ENCODE measurements at regions of chr3 and their contacts with region 1.

Region 1: GRCh38 chr3:18988614-18989229 is 159.6 kb upstream of the KCNH8 start:
- DNase-seq: no peak
- H3K4me3 ChIP-seq: no peak overlapping the region
- H3K27ac ChIP-seq: no peak overlapping the region
- H3K4me1 ChIP-seq: peaks cover 0 to 11% (median 0%) of the 10 kb centered on the region in 4 experiments; a peak in 1 of 7 replicates
- H3K27me3 ChIP-seq: no peaks in the 10 kb centered on the region
- CTCF ChIP-seq: peak in 2 of 3 experiments; percentile 62 to 69; a peak in 2 of 4 replicates
- EP300 ChIP-seq: no peak
- POLR2A ChIP-seq: no peak
- RAD21 ChIP-seq: peak; percentile 94 to 95

Region 2: GRCh38 chr3:18559331-18559842 is 429.3 kb before region 1 on chr3:
- CTCF ChIA-PET with region 1: interaction called, 29 read pairs
- POLR2A ChIA-PET with region 1: no interaction called
- DNase-seq: peak; percentile 27 to 52
- H3K4me3 ChIP-seq: no peak overlapping the region
- H3K27ac ChIP-seq: no peak overlapping the region
- H3K4me1 ChIP-seq: peaks cover 0 to 5% (median 0%) of the 10 kb centered on the region in 4 experiments; a peak in 1 of 7 replicates
- H3K27me3 ChIP-seq: no peaks in the 10 kb centered on the region
- CTCF ChIP-seq: peak; percentile 30 to 78 (median 78)
- EP300 ChIP-seq: no peak
- POLR2A ChIP-seq: no peak
- RAD21 ChIP-seq: peak; percentile 80 to 84

Region 3: DNA sequence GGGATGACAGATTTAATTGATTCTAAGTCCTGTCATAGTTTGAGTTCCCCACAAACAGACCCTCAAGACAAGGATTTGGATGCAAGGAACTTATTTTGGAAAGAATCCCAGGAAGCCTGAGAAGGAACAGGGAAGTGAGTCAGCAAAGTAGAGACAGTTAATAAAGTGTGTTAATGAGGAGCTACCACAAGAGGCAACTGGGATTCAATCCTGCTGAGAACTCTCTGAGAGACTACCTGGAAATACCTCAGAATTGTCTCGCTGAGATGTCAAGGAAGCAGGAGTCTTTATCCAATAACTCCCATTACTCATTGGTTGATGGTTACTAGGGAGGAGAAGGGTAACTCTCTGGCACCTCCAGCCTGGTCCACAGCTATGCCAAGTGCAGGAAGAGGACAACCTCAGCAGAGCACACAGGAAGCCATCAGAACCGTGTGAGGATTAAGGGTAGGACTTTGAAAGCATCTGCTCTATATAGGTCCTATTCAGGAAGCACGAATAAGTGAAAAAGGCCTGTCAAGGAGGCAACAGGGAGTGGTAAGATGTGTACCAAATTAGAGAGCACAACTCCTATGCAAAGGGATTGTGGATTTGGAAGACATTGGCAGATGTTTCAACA is 151.5 kb before region 1 on chr3:
- CTCF ChIA-PET with region 1: interaction called, 18 read pairs
- POLR2A ChIA-PET with region 1: no interaction called
- DNase-seq: no peak
- H3K4me3 ChIP-seq: no peak overlapping the region
- H3K27ac ChIP-seq: no peak overlapping the region
- H3K4me1 ChIP-seq: no peaks in the 10 kb centered on the region; a peak in 1 of 7 replicates
- H3K27me3 ChIP-seq: no peaks in the 10 kb centered on the region
- CTCF ChIP-seq: no peak
- EP300 ChIP-seq: no peak
- POLR2A ChIP-seq: no peak
- RAD21 ChIP-seq: no peak

Region 4: DNA sequence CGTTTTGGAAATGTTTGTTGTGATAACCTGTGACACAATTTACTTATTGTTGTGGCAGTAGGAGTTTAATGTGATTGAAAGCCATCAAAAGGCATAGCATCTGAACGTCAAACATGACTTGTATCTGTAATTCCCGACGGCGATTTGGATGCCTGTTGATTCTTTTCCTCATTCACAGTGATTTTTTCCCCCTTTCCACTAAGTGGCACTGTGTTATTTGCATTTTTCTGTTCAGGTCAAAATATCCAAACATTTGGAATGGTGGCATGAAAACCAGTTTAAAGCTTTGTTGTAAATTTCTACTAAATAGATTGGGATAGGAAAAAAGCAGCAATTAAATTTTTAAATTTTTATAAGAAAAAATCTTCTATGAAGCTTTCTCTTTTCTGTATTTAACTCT is 100.4 kb before region 1 on chr3:
- CTCF ChIA-PET with region 1: interaction called, 34 read pairs
- POLR2A ChIA-PET with region 1: no interaction called
- DNase-seq: no peak
- H3K4me3 ChIP-seq: no peak overlapping the region
- H3K27ac ChIP-seq: no peak overlapping the region
- H3K4me1 ChIP-seq: no peaks in the 10 kb centered on the region
- H3K27me3 ChIP-seq: no peaks in the 10 kb centered on the region
- CTCF ChIP-seq: peak in 1 of 3 experiments; percentile 12; a peak in 1 of 4 replicates
- EP300 ChIP-seq: no peak
- POLR2A ChIP-seq: no peak
- RAD21 ChIP-seq: peak; percentile 30 to 44; a peak in 3 of 4 replicates

Region 5: GRCh38 chr3:19030522-19030839 is 41.8 kb after region 1 on chr3:
- CTCF ChIA-PET with region 1: interaction called, 11 read pairs
- POLR2A ChIA-PET with region 1: no interaction called
- DNase-seq: no peak
- H3K4me3 ChIP-seq: no peak overlapping the region
- H3K27ac ChIP-seq: no peak overlapping the region
- H3K4me1 ChIP-seq: no peaks in the 10 kb centered on the region
- H3K27me3 ChIP-seq: no peaks in the 10 kb centered on the region
- CTCF ChIP-seq: peak in 2 of 3 experiments; percentile 49 to 52; a peak in 3 of 4 replicates
- EP300 ChIP-seq: no peak
- POLR2A ChIP-seq: no peak
- RAD21 ChIP-seq: peak; percentile 81 to 85

Region 6: DNA sequence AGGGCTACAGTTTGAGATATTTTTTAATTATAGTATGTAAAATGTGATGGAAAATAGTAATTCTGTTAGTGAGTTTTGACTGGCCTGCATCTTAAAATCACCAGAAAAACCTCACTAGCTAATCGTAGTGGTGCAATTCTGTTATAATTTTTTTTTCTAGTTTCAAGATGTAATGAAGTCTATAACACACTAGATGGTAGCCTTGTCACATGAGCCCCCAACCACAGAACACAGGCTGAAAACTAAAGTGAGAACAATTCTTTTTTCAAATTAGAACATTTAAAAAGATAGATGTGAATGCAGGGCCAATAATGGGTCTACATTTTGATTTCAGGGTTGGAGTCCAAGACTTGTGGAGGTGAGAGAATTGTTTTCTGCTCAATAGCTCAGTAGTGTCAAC is 76.3 kb after region 1 on chr3:
- CTCF ChIA-PET with region 1: no interaction called
- POLR2A ChIA-PET with region 1: no interaction called
- DNase-seq: no peak
- H3K4me3 ChIP-seq: no peak overlapping the region
- H3K27ac ChIP-seq: no peak overlapping the region
- H3K4me1 ChIP-seq: no peaks in the 10 kb centered on the region
- H3K27me3 ChIP-seq: peaks cover 0 to 2% (median 0%) of the 10 kb centered on the region in 4 experiments; a peak in 1 of 7 replicates
- CTCF ChIP-seq: peak in 2 of 3 experiments; percentile 47 to 57; a peak in 2 of 4 replicates
- EP300 ChIP-seq: no peak
- POLR2A ChIP-seq: no peak
- RAD21 ChIP-seq: peak; percentile 96

Measured in H1 (cell line).